ENCODE measurements at regions of chr1 and their contacts with region 1.

Region 1: GRCh38 chr1:153990468-153991150 is at the start of gene RPS27:
- DNase-seq: peak; percentile 77 to 98 (median 84)
- ATAC-seq: peak; percentile 85
- H3K4me3 ChIP-seq: peak within 1 kb of the TSS; percentile 71
- H3K4me3 Mint-ChIP-seq: peak within 1 kb of the TSS; percentile 97
- H3K27ac ChIP-seq: peak within 1 kb of the TSS; percentile 97
- H3K27ac Mint-ChIP-seq: peak within 1 kb of the TSS; percentile 96
- H3K4me1 ChIP-seq: peaks cover 40% of the 10 kb centered on the region
- H3K4me1 Mint-ChIP-seq: peaks cover 49% of the 10 kb centered on the region
- H3K27me3 ChIP-seq: peaks cover 0 to 3% of the 10 kb centered on the region in 2 experiments
- H3K27me3 Mint-ChIP-seq: peaks cover 9% of the 10 kb centered on the region
- CTCF ChIP-seq: no peak
- total RNA-seq, gene RPS27: 7,636 to 8,442 TPM

Region 2: DNA sequence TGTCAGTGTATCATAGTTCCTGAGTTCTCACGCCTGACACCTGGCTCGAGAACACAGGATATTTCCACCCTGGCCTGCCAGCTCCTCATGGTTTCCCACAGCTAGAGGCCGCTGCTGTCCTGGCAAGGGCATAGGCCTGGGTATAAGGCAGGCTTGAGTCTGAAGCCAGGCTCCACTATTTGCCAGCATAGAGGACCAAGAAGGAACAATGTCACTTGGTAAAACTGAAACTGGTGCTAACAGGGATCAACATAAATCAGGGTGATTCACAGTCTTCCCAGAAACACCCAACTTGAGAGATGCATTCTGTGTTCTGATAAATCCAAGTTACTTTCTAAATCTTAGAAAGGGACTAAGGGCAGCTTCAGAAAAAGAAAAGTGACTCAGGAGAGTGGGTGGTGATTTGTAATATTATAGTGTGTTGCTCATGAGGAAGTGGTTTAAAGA is 418.0 kb before region 1 on chr1:
- CTCF ChIA-PET with region 1: no interaction called
- POLR2A ChIA-PET with region 1: no interaction called
- intact Hi-C with region 1: loop called in 1 of 2 experiments (anchors 5 kb)
- DNase-seq: peak in 12 of 14 experiments; percentile 23 to 70 (median 46)
- ATAC-seq: peak; percentile 72
- H3K4me3 ChIP-seq: no peak overlapping the region
- H3K4me3 Mint-ChIP-seq: no peak overlapping the region
- H3K27ac ChIP-seq: no peak overlapping the region
- H3K27ac Mint-ChIP-seq: no peak overlapping the region
- H3K4me1 ChIP-seq: peaks cover 17% of the 10 kb centered on the region
- H3K4me1 Mint-ChIP-seq: peaks cover 20% of the 10 kb centered on the region
- H3K27me3 ChIP-seq: peaks cover 0 to 2% of the 10 kb centered on the region in 2 experiments
- H3K27me3 Mint-ChIP-seq: peaks cover 9% of the 10 kb centered on the region
- CTCF ChIP-seq: no peak

Region 3: GRCh38 chr1:153727463-153728304 is 262.9 kb before region 1 on chr1 and contains the start of gene INTS3:
- CTCF ChIA-PET with region 1: no interaction called
- POLR2A ChIA-PET with region 1: interaction called, 13 read pairs
- intact Hi-C with region 1: loop called in 1 of 2 experiments (anchors 5 kb)
- DNase-seq: peak; percentile 95 to 100 (median 99)
- ATAC-seq: peak; percentile 99
- H3K4me3 ChIP-seq: peak within 1 kb of the TSS; percentile 71
- H3K4me3 Mint-ChIP-seq: peak within 1 kb of the TSS; percentile 95
- H3K27ac ChIP-seq: peak within 1 kb of the TSS; percentile 91 to 94
- H3K27ac Mint-ChIP-seq: peak within 1 kb of the TSS; percentile 84
- H3K4me1 ChIP-seq: peaks cover 23% of the 10 kb centered on the region
- H3K4me1 Mint-ChIP-seq: peaks cover 29% of the 10 kb centered on the region
- H3K27me3 ChIP-seq: no peaks in the 10 kb centered on the region
- H3K27me3 Mint-ChIP-seq: no peaks in the 10 kb centered on the region
- CTCF ChIP-seq: no peak
- total RNA-seq, gene INTS3: 24.9 to 27.4 TPM

Region 4: GRCh38 chr1:153796791-153797659 is 193.6 kb before region 1 on chr1:
- CTCF ChIA-PET with region 1: interaction called, 28 read pairs
- POLR2A ChIA-PET with region 1: interaction called, 12 read pairs
- intact Hi-C with region 1: loop called (anchors 1 kb)
- DNase-seq: peak; percentile 70 to 92 (median 84)
- ATAC-seq: peak; percentile 98
- H3K4me3 ChIP-seq: no peak overlapping the region
- H3K4me3 Mint-ChIP-seq: no peak overlapping the region
- H3K27ac ChIP-seq: no peak overlapping the region
- H3K27ac Mint-ChIP-seq: no peak overlapping the region
- H3K4me1 ChIP-seq: peaks cover 13% of the 10 kb centered on the region
- H3K4me1 Mint-ChIP-seq: peaks cover 5% of the 10 kb centered on the region
- H3K27me3 ChIP-seq: no peaks in the 10 kb centered on the region
- H3K27me3 Mint-ChIP-seq: no peaks in the 10 kb centered on the region
- CTCF ChIP-seq: peak; percentile 84

Region 5: GRCh38 chr1:153946622-153947241 is 43.9 kb before region 1 on chr1 and contains the start of gene DENND4B:
- CTCF ChIA-PET with region 1: interaction called, 8 read pairs
- POLR2A ChIA-PET with region 1: interaction called, 55 read pairs
- intact Hi-C with region 1: loop called in 1 of 2 experiments (anchors 1 kb)
- DNase-seq: peak; percentile 55 to 89 (median 70)
- ATAC-seq: peak; percentile 57
- H3K4me3 ChIP-seq: peak within 1 kb of the TSS; percentile 84
- H3K4me3 Mint-ChIP-seq: peak within 1 kb of the TSS; percentile 89
- H3K27ac ChIP-seq: peak within 1 kb of the TSS; percentile 92 to 94
- H3K27ac Mint-ChIP-seq: peak within 1 kb of the TSS; percentile 86
- H3K4me1 ChIP-seq: peaks cover 50% of the 10 kb centered on the region
- H3K4me1 Mint-ChIP-seq: peaks cover 38% of the 10 kb centered on the region
- H3K27me3 ChIP-seq: no peaks in the 10 kb centered on the region
- H3K27me3 Mint-ChIP-seq: no peaks in the 10 kb centered on the region
- CTCF ChIP-seq: peak; percentile 88
- total RNA-seq, gene DENND4B: 87.0 to 98.7 TPM

Region 6: GRCh38 chr1:154157520-154158306 is 167.1 kb after region 1 on chr1:
- CTCF ChIA-PET with region 1: no interaction called
- POLR2A ChIA-PET with region 1: interaction called, 35 read pairs
- intact Hi-C with region 1: loop called (anchors 2 to 5 kb)
- DNase-seq: peak; percentile 49 to 91 (median 65)
- ATAC-seq: peak; percentile 98
- H3K4me3 ChIP-seq: no peak overlapping the region
- H3K4me3 Mint-ChIP-seq: peak overlapping the region; percentile 74
- H3K27ac ChIP-seq: peak overlapping the region; percentile 55 to 68
- H3K27ac Mint-ChIP-seq: peak overlapping the region; percentile 92
- H3K4me1 ChIP-seq: peaks cover 53% of the 10 kb centered on the region
- H3K4me1 Mint-ChIP-seq: peaks cover 74% of the 10 kb centered on the region
- H3K27me3 ChIP-seq: no peaks in the 10 kb centered on the region
- H3K27me3 Mint-ChIP-seq: no peaks in the 10 kb centered on the region
- CTCF ChIP-seq: no peak

Region 7: GRCh38 chr1:154263465-154264332 is 273.1 kb after region 1 on chr1:
- CTCF ChIA-PET with region 1: no interaction called
- POLR2A ChIA-PET with region 1: interaction called, 14 read pairs
- intact Hi-C with region 1: no loop called
- DNase-seq: no peak
- ATAC-seq: no peak
- H3K4me3 ChIP-seq: no peak overlapping the region
- H3K4me3 Mint-ChIP-seq: no peak overlapping the region
- H3K27ac ChIP-seq: peak overlapping the region in 1 of 2 donors; percentile 81
- H3K27ac Mint-ChIP-seq: peak overlapping the region; percentile 91
- H3K4me1 ChIP-seq: peaks cover 16% of the 10 kb centered on the region
- H3K4me1 Mint-ChIP-seq: peaks cover 46% of the 10 kb centered on the region
- H3K27me3 ChIP-seq: no peaks in the 10 kb centered on the region
- H3K27me3 Mint-ChIP-seq: no peaks in the 10 kb centered on the region
- CTCF ChIP-seq: no peak